Astrocyte of the cerebellum (primary cell): ENCODE measurements at regions of chr20 and their contacts with region 1.

Region 1: DNA sequence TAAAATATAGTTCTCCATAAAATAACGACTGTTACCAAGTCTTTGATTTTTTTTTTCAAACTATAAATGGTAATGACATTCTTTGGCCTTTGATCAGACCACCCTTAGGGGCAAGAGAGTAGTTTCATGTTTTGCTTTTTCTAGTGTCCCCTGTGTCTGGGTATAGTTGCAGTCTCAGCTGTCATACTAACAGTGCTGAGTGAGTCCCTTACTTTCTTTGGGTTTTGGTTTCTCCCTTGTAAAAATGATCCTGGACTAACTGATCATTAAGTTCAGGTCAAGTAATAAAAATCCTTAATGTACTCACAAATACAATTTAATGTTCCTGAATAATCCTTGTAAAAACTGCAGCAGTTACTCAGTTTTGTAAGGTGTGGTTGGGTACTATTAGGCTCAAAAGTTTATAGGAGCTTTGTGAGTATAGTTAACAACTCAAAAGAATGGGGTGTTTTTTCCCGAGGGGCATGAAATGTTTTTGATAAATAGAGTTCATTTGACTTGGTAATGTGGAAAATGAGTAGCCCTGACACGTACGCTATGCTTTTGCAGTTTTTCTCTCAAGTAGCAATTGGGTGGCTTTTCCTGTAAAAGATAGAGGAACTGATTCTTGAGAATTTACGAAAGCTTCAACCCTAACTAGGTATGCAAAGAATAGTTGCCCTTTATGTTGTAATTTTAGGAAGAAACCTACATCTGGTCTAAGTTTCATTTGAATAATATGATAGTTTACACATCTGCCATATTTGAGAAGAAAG is 6.2 kb downstream of the PTPN1 start:
- DNase-seq: no peak
- H3K4me3 ChIP-seq: no peak overlapping the region
- CTCF ChIP-seq: no peak

Region 2: GRCh38 chr20:50449738-50450495 is 66.4 kb before region 1 on chr20:
- in situ Hi-C with region 1: loop called (anchors 5 kb)
- DNase-seq: no peak
- H3K4me3 ChIP-seq: no peak overlapping the region
- CTCF ChIP-seq: no peak